Right cardiac atrium (tissue), 5 donors: ENCODE measurements at regions of chr5 and their contacts with region 1.

Region 1: GRCh38 chr5:72451741-72452505 is 55.3 kb downstream of the ZNF366 start:
- DNase-seq: peak; percentile 84 to 89 (median 84)
- ATAC-seq: peak; percentile 84 to 89
- H3K4me3 ChIP-seq: no peak overlapping the region
- H3K27ac ChIP-seq: peak overlapping the region; percentile 79
- H3K4me1 ChIP-seq: peaks cover 31% of the 10 kb centered on the region
- H3K27me3 ChIP-seq: no peaks in the 10 kb centered on the region

Region 2: DNA sequence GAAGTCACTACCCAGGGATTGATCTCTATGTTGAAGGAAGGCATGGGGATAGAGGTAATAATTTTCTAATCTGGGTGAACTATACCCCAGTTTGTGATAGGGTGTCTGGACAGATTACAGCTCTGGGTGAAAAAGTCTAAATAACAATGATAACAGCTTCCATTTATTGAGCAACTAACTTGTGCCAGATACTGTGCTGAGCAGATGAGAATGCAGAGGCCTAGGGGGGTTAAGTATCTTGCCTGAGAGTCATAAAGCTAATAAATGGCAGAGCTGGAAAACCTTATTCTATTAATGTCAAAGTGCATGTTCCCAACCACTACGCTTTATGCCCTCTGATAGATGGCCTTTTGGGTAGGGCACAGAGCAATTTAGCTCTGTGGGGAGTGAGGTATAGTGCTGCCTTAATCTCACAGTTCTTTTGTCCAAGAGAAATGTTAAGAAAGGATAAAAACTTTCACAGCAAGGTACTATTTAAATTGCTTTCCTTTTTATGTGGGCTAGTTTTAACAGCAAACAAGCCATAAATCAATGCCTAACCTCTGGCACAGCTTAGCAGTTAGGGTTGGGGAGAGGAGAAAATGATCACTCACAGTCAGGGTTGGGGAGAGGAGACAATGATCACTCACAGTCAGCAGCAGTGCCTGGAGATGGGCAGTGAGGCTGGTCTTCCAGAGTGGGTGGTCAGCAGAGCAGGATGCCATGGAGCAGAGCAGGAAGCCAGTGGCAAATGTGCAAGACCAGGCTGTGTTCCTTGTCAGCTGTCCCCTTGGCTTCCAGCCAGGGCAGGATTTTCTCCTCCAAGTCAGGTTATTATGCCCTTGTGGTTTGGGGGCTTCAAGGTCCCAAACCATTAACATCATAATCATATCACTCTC is 545.9 kb before region 1 on chr5:
- intact Hi-C with region 1: no loop called
- DNase-seq: peak in 1 of 3 donors; percentile 35
- ATAC-seq: peak in 1 of 2 donors; percentile 29
- H3K4me3 ChIP-seq: no peak overlapping the region
- H3K27ac ChIP-seq: no peak overlapping the region
- H3K4me1 ChIP-seq: peaks cover 3% of the 10 kb centered on the region
- H3K27me3 ChIP-seq: no peaks in the 10 kb centered on the region

Region 3: DNA sequence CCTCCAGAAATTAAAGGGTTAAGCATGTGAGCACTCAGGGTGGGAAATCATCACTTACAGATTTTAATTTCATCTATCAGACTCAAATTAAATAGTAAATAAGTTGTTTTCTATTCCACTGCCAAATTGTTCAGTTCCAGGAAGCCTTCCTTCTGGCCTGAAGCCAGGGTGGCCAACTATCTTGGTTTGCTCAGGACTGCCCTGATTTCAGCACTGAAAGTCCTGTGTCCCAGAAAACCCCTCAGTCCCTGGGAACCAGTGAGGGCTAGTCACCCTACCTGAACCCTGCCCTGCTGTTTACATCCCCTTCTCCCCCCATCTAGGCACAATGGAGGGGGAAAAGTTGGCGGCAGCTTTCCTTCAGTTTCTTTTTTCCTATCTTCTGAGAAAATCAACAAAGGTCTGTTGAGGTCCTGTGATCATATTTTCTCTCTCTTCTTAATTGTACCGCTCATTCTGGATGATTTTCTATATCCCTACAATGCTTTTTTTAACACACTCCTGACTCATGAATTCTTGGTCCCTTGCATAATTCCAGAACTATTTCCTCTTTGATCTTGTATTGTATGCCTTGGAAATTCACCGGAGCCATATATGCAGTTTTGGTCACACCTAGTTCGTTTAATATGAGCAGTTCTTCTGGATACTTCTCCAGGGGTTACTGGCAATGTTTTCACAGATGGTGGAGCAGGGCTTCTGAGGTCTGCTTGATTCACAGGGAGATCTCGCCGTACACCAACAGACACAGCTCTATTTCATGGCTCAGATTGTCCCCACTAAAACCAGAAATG is 240.8 kb before region 1 on chr5:
- intact Hi-C with region 1: no loop called
- DNase-seq: peak; percentile 72 to 86 (median 82)
- ATAC-seq: peak; percentile 80 to 82
- H3K4me3 ChIP-seq: no peak overlapping the region
- H3K27ac ChIP-seq: peak overlapping the region; percentile 68
- H3K4me1 ChIP-seq: peaks cover 9% of the 10 kb centered on the region
- H3K27me3 ChIP-seq: no peaks in the 10 kb centered on the region

Region 4: DNA sequence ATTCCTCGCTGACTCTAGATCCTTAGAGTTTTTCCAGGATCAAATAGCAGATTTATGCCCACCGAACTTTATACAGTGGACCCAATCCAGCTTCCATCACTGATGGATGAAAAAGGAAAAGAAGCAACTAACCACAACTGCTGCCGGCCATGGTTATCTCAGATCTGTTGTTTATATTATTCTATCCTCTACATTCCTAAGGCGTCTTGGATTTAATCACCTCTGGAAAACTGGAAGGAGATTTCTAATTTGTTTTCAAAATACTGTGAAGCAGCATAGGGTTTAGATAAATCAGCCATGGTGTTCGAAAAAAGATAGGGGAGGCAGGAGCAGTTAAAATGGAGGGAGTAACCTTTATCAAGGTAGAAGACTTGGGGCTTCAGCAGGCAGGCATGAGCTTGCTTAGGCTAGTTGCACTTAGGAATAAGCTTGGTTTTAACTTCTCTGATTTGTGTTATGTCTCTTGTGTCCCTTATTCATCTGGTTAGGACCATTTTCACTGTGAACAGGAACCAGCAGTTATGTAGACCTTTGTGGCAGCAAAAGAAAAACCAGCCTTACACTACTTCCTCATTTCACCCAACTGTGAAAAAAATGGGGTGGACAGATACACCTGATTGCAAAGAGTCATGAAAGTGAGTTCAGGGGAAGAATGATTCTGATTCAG is 56.1 kb after region 1 on chr5:
- intact Hi-C with region 1: loop called in 1 of 4 experiments (anchors 10 kb)
- DNase-seq: no peak
- ATAC-seq: no peak
- H3K4me3 ChIP-seq: no peak overlapping the region
- H3K27ac ChIP-seq: peak overlapping the region; percentile 74
- H3K4me1 ChIP-seq: peaks cover 18% of the 10 kb centered on the region
- H3K27me3 ChIP-seq: no peaks in the 10 kb centered on the region